ENCODE measurements at regions of chr2 and their contacts with region 1.

Region 1: DNA sequence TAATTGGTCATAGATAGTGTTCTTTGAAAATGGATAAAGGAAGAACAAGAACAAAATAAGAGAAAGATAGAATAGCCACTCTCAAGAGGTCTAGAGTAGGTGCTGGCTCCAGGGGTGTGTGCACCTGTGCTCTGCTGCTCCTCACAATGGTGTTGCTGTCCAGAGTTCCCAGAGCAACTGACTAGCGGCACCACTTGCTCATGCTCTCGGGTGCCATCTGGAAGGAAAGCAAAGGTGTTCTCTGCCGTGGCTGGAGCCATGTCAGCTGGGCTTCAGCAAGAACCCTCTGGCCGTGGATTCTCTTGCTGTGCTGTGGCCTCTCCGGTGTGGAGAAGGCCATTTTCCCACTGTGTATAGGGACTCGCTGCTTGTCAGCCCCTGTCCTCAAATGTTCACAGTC is 114.7 kb upstream of the TEX51 start:
- DNase-seq: no peak
- ATAC-seq: no peak
- H3K4me3 ChIP-seq: no peak overlapping the region
- H3K27ac ChIP-seq: no peak overlapping the region
- H3K4me1 ChIP-seq: no peaks in the 10 kb centered on the region
- H3K27me3 ChIP-seq: peaks cover 0 to 30% (median 14%) of the 10 kb centered on the region in 7 donors
- CTCF ChIP-seq: no peak

Region 2: DNA sequence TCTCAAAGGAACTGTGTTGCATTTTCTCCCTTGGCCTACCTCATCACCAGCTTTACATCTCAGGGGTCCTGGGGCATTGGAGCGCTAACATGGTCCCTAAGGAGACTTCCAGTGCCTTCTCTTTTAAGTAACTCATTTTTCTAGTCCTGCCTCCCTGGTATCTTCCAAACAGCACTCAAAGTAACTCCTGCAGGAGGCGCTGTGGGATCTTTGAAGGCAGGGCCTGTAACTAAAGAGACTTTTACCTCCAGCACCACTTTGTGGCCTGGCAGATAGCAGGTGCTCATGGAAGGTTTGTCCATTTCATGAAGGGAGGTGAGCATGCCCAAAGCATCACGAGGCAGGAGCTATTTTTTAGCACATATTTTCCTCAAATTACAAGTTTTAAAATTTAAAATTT is 539.1 kb before region 1 on chr2:
- intact Hi-C with region 1: loop called in 9 of 10 experiments (anchors 5 to 10 kb)
- DNase-seq: peak; percentile 21 to 26
- ATAC-seq: peak in 1 of 8 donors; percentile 42
- H3K4me3 ChIP-seq: no peak overlapping the region
- H3K27ac ChIP-seq: no peak overlapping the region
- H3K4me1 ChIP-seq: peaks cover 0 to 7% (median 0%) of the 10 kb centered on the region in 9 donors
- H3K27me3 ChIP-seq: peaks cover 0 to 5% (median 0%) of the 10 kb centered on the region in 7 donors
- CTCF ChIP-seq: peak in 7 of 9 donors; percentile 40 to 56 (median 44)

Region 3: DNA sequence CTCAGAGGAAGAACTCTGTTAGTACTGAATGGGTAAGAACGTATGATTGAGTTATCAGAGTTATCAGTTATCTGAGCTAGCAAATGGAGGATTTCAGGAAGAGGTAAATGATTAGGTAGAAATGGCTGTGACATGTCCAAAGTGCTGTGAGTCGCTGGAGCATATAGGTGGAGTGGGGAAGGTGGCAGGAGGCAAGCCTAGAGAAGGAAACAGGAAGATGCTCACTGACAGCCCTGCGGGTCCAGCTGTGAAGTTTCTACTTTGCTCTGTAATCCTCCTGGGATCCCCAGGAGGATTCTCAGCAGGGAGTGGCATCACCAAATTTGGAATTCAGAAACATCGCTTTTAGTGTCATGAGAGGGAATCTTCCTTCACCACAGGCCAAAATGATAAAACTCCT is 76.1 kb before region 1 on chr2:
- intact Hi-C with region 1: loop called in 1 of 10 experiments (anchors 2 kb)
- DNase-seq: peak in 1 of 2 donors; percentile 1
- ATAC-seq: no peak
- H3K4me3 ChIP-seq: no peak overlapping the region
- H3K27ac ChIP-seq: no peak overlapping the region
- H3K4me1 ChIP-seq: peaks cover 6 to 32% (median 22%) of the 10 kb centered on the region in 9 donors
- H3K27me3 ChIP-seq: no peaks in the 10 kb centered on the region
- CTCF ChIP-seq: no peak

Region 4: GRCh38 chr2:126825316-126825715 is 41.3 kb after region 1 on chr2:
- intact Hi-C with region 1: no loop called
- DNase-seq: no peak
- ATAC-seq: no peak
- H3K4me3 ChIP-seq: no peak overlapping the region
- H3K27ac ChIP-seq: no peak overlapping the region
- H3K4me1 ChIP-seq: peaks cover 0 to 6% (median 0%) of the 10 kb centered on the region in 9 donors
- H3K27me3 ChIP-seq: peaks cover 0 to 4% (median 0%) of the 10 kb centered on the region in 7 donors
- CTCF ChIP-seq: no peak